ENCODE measurements at regions of chr9 and their contacts with region 1.

Region 1: GRCh38 chr9:127004946-127005769 is 90.6 kb downstream of the RALGPS1 start:
- DNase-seq: peak in 34 of 35 experiments; percentile 38 to 85 (median 70)
- ATAC-seq: peak; percentile 98 to 99 (median 99)
- H3K4me3 ChIP-seq: no peak overlapping the region
- H3K4me3 Mint-ChIP-seq: peak overlapping the region in 1 of 3 donors; percentile 26
- H3K27ac ChIP-seq: peak overlapping the region; percentile 40
- H3K27ac Mint-ChIP-seq: peak overlapping the region; percentile 41 to 58
- H3K4me1 ChIP-seq: peaks cover 15% of the 10 kb centered on the region in 2 experiments
- H3K4me1 Mint-ChIP-seq: peaks cover 24 to 28% (median 25%) of the 10 kb centered on the region in 3 donors
- H3K27me3 ChIP-seq: no peaks in the 10 kb centered on the region
- H3K27me3 Mint-ChIP-seq: peaks cover 1 to 19% of the 10 kb centered on the region in 2 donors

Region 2: DNA sequence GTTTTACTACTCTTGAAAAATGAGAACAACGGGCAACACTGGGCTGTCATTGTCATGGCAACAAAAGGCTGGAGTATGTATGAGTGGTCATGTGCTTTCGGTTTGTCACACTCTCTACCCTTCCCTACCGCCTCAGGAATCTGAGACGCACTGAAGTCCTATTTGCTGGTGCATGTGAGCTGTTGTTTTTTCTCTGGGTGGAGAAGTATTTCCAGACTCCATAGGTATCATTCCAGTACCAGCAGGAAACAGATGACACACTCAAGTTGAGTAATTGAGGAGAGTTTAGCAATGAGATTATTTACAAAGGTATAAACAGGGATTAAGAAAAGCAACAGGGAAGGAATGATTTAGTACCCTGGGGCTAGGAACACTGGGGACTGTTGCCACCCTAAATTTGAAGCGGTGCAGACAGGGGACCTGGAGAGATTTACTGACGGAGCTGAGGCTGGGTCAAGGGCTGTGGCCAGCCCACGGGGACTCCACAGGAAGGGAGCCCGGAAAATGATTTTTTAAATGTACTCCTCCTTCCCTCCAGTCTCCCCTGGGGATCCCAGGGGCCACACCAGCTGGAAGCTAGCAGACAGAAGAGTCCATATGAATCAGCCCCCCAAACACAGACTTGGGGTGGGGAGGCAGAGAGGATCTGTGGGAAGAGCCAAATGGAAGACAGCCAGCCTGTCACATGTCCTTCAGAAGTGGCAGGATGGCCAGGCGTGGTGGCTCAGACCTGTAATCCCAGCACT is 213.6 kb before region 1 on chr9:
- CTCF ChIA-PET with region 1: no interaction called
- POLR2A ChIA-PET with region 1: no interaction called
- DNase-seq: no peak
- ATAC-seq: no peak
- H3K4me3 ChIP-seq: no peak overlapping the region
- H3K4me3 Mint-ChIP-seq: no peak overlapping the region
- H3K27ac ChIP-seq: no peak overlapping the region
- H3K27ac Mint-ChIP-seq: no peak overlapping the region
- H3K4me1 ChIP-seq: no peaks in the 10 kb centered on the region
- H3K4me1 Mint-ChIP-seq: no peaks in the 10 kb centered on the region
- H3K27me3 ChIP-seq: peaks cover 6 to 37% of the 10 kb centered on the region in 2 experiments
- H3K27me3 Mint-ChIP-seq: peaks cover 35 to 58% of the 10 kb centered on the region in 2 donors

Region 3: DNA sequence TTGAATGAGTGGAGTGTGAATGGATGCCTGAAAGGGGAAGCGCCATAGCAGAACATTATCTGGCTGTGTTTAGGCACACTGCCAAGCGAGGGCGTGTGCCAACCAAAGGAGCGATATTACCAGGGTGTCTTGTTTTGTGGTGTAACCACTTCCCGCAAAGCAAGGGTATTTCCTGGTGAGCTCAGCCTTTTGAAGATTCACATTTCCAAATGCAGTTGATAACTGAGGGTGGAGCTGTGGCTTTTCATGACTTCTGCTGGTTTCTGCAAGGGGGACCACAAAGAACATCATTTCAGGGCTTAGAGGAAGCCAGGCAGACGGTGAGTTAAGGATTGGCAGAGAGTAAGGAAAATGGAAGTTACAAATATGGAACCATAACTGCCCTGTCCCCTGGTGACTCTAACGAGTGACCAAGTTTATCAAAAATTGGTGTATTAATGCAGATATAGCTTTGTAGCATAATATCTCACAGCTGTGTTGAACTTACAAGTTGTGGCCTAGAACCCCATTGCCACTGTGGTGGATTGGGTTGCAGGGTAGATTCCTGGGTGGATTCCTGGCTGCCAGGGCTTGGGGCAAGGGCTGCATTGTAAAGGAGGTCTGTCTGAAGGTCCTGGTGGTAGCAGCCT is 19.2 kb before region 1 on chr9:
- CTCF ChIA-PET with region 1: interaction called in 1 of 2 experiments, 18 read pairs
- POLR2A ChIA-PET with region 1: interaction called in 1 of 2 experiments, 8 read pairs
- DNase-seq: peak; percentile 68 to 98 (median 89)
- ATAC-seq: peak; percentile 90 to 94 (median 92)
- H3K4me3 ChIP-seq: peak overlapping the region; percentile 7 to 56
- H3K4me3 Mint-ChIP-seq: peak overlapping the region; percentile 47 to 72 (median 52)
- H3K27ac ChIP-seq: peak overlapping the region; percentile 53
- H3K27ac Mint-ChIP-seq: peak overlapping the region; percentile 23 to 62
- H3K4me1 ChIP-seq: peaks cover 32 to 68% of the 10 kb centered on the region in 2 experiments
- H3K4me1 Mint-ChIP-seq: peaks cover 64 to 81% (median 77%) of the 10 kb centered on the region in 3 donors
- H3K27me3 ChIP-seq: peaks cover 3 to 42% of the 10 kb centered on the region in 2 experiments
- H3K27me3 Mint-ChIP-seq: peaks cover 43 to 58% of the 10 kb centered on the region in 2 donors

Measured in T-cell (primary cell).